Activated CD4-positive, alpha-beta memory T cell treated with anti-CD3 and anti-CD28 coated beads for 36 hours (primary cell): ENCODE measurements at regions of chr16 and their contacts with region 1.

Region 1: GRCh38 chr16:69726296-69727060 is at the start of gene NQO1:
- DNase-seq: peak; percentile 96
- H3K4me3 Mint-ChIP-seq: peak within 1 kb of the TSS; percentile 87
- H3K27ac Mint-ChIP-seq: peak within 1 kb of the TSS; percentile 86
- H3K4me1 Mint-ChIP-seq: peaks cover 17% of the 10 kb centered on the region
- H3K27me3 Mint-ChIP-seq: no peaks in the 10 kb centered on the region
- total RNA-seq, gene NQO1: 14.9 to 18.2 TPM

Region 2: GRCh38 chr16:69435977-69436820 is 290.3 kb before region 1 on chr16:
- CTCF ChIA-PET with region 1: no interaction called
- POLR2A ChIA-PET with region 1: interaction called, 3 read pairs
- intact Hi-C with region 1: loop called (anchors 1 kb)
- DNase-seq: no peak
- H3K4me3 Mint-ChIP-seq: no peak overlapping the region
- H3K27ac Mint-ChIP-seq: no peak overlapping the region
- H3K4me1 Mint-ChIP-seq: peaks cover 78% of the 10 kb centered on the region
- H3K27me3 Mint-ChIP-seq: no peaks in the 10 kb centered on the region

Region 3: DNA sequence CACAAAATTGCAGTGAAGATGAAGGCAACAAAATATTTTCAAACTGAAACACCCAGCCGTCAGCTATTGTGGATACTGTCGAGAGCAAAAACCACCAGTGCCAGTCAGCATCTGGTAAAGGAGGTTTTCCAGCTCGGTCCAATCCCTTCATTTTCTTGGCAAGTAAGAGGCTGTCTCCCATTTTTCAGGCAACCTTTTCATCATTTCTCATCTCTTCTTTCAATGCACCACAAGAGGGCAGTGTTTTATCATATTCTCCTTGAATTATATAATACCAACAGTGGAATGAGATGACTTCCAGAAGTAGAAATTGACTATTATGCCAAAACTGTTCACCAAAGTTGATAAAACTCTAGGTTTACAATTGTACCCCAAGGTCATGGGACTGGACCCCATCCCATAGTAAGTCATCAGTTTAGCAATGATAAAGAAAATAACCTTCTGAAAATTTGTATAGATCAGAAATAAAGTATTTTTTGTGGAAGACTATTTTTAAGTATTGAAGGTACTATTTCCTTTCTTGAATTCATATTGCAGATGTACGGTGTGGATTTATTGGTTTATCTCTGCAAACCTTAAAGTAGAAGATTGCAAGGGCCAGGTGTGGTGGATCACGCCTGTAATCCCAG is 16.9 kb before region 1 on chr16:
- CTCF ChIA-PET with region 1: interaction called, 6 read pairs
- POLR2A ChIA-PET with region 1: no interaction called
- intact Hi-C with region 1: loop called (anchors 1 kb)
- DNase-seq: no peak
- H3K4me3 Mint-ChIP-seq: no peak overlapping the region
- H3K27ac Mint-ChIP-seq: no peak overlapping the region
- H3K4me1 Mint-ChIP-seq: peaks cover 7% of the 10 kb centered on the region
- H3K27me3 Mint-ChIP-seq: no peaks in the 10 kb centered on the region